Mammary epithelial cell (primary cell): ENCODE measurements at regions of chrX and their contacts with region 1.

Region 1: DNA sequence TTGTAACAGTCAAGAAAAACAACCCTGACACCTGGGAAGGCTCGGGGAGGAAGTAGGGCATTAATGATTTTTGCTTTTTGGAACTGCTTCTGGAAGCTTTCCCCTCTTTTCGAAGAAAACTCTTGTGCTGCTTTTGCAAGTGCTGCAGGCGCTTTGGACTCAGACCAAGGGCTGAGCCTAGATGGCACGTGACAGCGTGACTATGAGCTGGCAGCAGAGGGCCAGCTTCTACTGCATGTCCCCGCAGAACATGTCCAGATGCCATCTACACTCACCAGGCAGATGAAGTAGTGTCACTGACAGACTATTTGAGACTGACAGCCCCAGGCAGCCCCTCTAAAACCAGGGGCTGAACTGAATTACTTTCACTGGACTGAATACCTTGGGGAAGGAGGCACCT is 6.2 kb downstream of the NR0B1 start:
- DNase-seq: peak; percentile 35
- H3K4me3 ChIP-seq: no peak overlapping the region
- H3K27ac ChIP-seq: no peak overlapping the region
- H3K4me1 ChIP-seq: peaks cover 12% of the 10 kb centered on the region
- H3K27me3 ChIP-seq: no peaks in the 10 kb centered on the region
- CTCF ChIP-seq: no peak

Region 2: DNA sequence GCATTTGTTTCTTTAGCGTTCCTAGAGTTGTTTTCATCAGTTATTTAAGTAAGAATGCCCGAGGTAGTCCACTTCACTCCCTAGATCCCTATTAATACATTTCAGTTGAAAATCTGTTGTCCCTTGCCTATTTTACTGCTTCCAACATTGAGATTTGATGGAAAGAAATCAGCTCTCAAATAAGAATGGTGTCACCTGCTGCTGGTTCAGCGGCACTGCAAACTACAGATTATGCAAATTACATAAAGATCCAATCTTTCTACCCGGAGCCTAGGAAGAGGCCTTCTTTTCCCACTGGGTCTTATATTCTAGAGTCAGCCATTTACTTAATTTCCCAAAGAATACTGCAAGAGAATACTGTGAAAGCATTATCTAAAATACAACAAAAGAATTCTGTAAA is 685.2 kb before region 1 on chrX:
- CTCF ChIA-PET with region 1: no interaction called
- dilution Hi-C with region 1: no loop called
- in situ Hi-C with region 1: no loop called
- intact Hi-C with region 1: no loop called
- DNase-seq: no peak
- H3K4me3 ChIP-seq: no peak overlapping the region
- H3K27ac ChIP-seq: no peak overlapping the region
- H3K4me1 ChIP-seq: no peaks in the 10 kb centered on the region
- H3K27me3 ChIP-seq: no peaks in the 10 kb centered on the region
- CTCF ChIP-seq: peak; percentile 17 to 37

Region 3: DNA sequence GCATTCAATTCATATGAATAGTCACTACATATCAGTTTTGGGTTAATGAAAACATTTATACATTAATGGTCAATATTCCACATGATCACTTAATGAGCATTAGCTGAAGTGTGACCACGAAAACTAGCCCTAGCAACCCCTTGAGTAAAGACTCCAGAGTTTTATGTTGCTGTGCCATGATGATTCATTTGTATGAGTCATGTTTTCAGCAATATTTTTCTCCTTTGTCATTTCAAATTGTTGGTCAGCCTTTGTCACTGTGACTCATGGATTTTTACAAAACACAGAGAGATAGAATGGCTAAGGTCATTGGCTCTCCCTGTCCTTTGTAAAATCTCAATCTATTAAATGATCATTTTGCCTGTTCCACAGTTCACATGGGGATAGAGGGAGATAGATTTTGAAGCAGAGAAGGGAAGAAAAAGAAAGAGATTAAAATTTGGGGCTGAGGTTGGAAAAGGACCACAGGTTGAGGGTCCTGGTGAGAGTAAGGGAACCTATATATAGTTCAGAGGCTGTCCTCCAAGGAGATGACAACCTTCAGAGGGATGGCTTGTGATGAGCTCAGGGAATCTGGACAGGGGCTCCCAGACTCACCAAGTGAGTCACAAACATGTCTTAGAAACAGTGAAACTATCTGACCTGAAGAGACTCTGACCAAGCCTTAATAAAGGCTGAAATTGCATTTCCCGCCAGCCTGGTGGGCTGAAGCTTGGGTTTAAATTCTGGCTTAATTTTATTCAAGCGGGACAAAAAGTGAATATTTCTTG is 19.3 kb before region 1 on chrX:
- CTCF ChIA-PET with region 1: no interaction called
- dilution Hi-C with region 1: no loop called
- in situ Hi-C with region 1: no loop called
- intact Hi-C with region 1: loop called (anchors 2 kb)
- DNase-seq: peak; percentile 88
- H3K4me3 ChIP-seq: no peak overlapping the region
- H3K27ac ChIP-seq: peak overlapping the region; percentile 88
- H3K4me1 ChIP-seq: peaks cover 17% of the 10 kb centered on the region
- H3K27me3 ChIP-seq: no peaks in the 10 kb centered on the region
- CTCF ChIP-seq: no peak